Heart left ventricle (tissue), 16 donors: ENCODE measurements at regions of chr6 and their contacts with region 1.

Region 1: GRCh38 chr6:134047673-134048072 is 4.8 kb downstream of the SLC2A12 start:
- DNase-seq: peak; percentile 52 to 77 (median 63)
- ATAC-seq: peak; percentile 81 to 93 (median 87)
- H3K4me3 ChIP-seq: no peak overlapping the region
- H3K27ac ChIP-seq: peak overlapping the region; percentile 16 to 65 (median 44)
- H3K4me1 ChIP-seq: peaks cover 0 to 40% (median 6%) of the 10 kb centered on the region in 12 donors
- H3K27me3 ChIP-seq: no peaks in the 10 kb centered on the region
- CTCF ChIP-seq: no peak
- POLR2A ChIP-seq: no peak

Region 2: GRCh38 chr6:132798869-132799538 is 1248.7 kb before region 1 on chr6:
- intact Hi-C with region 1: no loop called
- DNase-seq: peak; percentile 64 to 77 (median 73)
- ATAC-seq: peak; percentile 79 to 94 (median 88)
- H3K4me3 ChIP-seq: peak overlapping the region in 11 of 12 donors; percentile 36 to 92 (median 72)
- H3K27ac ChIP-seq: peak overlapping the region in 8 of 12 donors; percentile 47 to 87 (median 72)
- H3K4me1 ChIP-seq: peaks cover 0 to 9% (median 1%) of the 10 kb centered on the region in 12 donors
- H3K27me3 ChIP-seq: no peaks in the 10 kb centered on the region
- CTCF ChIP-seq: peak; percentile 50 to 86 (median 73)
- POLR2A ChIP-seq: no peak

Region 3: DNA sequence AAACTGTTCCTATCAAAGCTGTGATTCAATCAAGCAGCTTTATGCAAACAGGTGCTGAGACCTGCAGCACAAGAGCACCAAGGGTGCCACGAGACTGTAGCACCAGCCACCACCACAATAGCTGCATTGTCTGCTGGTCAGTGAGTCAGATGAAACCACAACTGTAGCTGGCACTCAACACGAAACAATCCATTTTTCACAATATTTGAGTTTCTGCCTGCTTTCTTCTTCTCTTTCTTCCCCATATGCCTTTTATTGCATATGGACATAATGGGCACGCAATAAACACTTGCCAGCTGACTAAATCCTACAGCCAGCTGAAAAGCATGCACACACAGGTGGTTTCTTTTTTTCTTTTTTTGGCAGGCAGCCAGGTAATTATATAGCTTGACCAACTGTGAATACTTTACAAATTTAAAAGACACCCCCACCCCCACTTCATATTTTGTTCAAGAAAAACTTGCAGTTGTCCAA is 11.8 kb before region 1 on chr6:
- intact Hi-C with region 1: loop called in 1 of 10 experiments (anchors 1 kb)
- DNase-seq: no peak
- ATAC-seq: peak in 1 of 4 donors; percentile 35
- H3K4me3 ChIP-seq: no peak overlapping the region
- H3K27ac ChIP-seq: no peak overlapping the region
- H3K4me1 ChIP-seq: peaks cover 0 to 32% (median 8%) of the 10 kb centered on the region in 12 donors
- H3K27me3 ChIP-seq: no peaks in the 10 kb centered on the region
- CTCF ChIP-seq: no peak
- POLR2A ChIP-seq: no peak